OCI-LY7 (cell line): ENCODE measurements at regions of chr14 and their contacts with region 1.

Region 1: GRCh38 chr14:61252369-61253063 is 28.6 kb downstream of the TMEM30B start:
- DNase-seq: peak; percentile 89
- H3K4me3 ChIP-seq: peak overlapping the region; percentile 40
- H3K27ac ChIP-seq: peak overlapping the region; percentile 69
- H3K4me1 ChIP-seq: peaks cover 23% of the 10 kb centered on the region
- CTCF ChIP-seq: peak; percentile 98

Region 2: DNA sequence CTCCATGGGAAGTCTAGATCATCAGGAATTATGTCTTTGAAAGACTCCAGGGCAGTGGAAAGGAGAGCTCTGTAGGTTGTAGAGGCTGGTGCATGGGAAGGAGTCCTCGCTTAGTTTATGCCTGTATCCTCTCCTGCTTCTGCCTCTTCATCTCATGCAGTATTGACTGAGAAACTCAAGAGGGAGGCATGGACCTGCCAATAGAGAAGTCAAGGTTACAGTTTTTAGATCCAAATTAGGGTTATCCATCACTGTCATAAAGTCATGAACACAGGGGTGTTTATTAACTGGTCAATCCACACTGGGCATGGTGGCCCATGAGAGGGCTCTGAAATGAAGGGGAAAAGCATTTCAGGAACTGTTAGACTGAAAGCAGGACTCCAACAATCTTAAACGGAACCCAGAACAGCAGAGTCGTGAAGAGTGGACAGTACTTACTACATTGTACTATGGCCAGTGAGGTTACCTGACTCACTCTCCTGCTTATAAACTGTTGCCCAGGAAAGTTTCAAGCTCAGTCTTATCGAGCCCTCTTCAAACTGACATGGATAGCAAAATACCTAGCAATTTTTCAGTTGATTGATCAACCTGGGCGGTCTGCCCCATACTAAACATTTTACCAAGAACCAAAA is 1057.2 kb before region 1 on chr14:
- CTCF ChIA-PET with region 1: no interaction called
- POLR2A ChIA-PET with region 1: no interaction called
- intact Hi-C with region 1: loop called (anchors 10 kb)
- DNase-seq: peak; percentile 67
- H3K4me3 ChIP-seq: no peak overlapping the region
- H3K27ac ChIP-seq: no peak overlapping the region
- H3K4me1 ChIP-seq: peaks cover 24% of the 10 kb centered on the region
- CTCF ChIP-seq: peak; percentile 78

Region 3: GRCh38 chr14:60561845-60562746 is 690.4 kb before region 1 on chr14:
- CTCF ChIA-PET with region 1: interaction called, 3 read pairs
- POLR2A ChIA-PET with region 1: no interaction called
- intact Hi-C with region 1: loop called (anchors 5 kb)
- DNase-seq: peak; percentile 90
- H3K4me3 ChIP-seq: no peak overlapping the region
- H3K27ac ChIP-seq: no peak overlapping the region
- H3K4me1 ChIP-seq: peaks cover 78% of the 10 kb centered on the region
- CTCF ChIP-seq: peak; percentile 97

Region 4: GRCh38 chr14:60622917-60623257 is 629.6 kb before region 1 on chr14:
- CTCF ChIA-PET with region 1: interaction called, 3 read pairs
- POLR2A ChIA-PET with region 1: interaction called, 4 read pairs
- intact Hi-C with region 1: loop called (anchors 1 kb)
- DNase-seq: no peak
- H3K4me3 ChIP-seq: no peak overlapping the region
- H3K27ac ChIP-seq: no peak overlapping the region
- H3K4me1 ChIP-seq: peaks cover 4% of the 10 kb centered on the region
- CTCF ChIP-seq: no peak

Region 5: DNA sequence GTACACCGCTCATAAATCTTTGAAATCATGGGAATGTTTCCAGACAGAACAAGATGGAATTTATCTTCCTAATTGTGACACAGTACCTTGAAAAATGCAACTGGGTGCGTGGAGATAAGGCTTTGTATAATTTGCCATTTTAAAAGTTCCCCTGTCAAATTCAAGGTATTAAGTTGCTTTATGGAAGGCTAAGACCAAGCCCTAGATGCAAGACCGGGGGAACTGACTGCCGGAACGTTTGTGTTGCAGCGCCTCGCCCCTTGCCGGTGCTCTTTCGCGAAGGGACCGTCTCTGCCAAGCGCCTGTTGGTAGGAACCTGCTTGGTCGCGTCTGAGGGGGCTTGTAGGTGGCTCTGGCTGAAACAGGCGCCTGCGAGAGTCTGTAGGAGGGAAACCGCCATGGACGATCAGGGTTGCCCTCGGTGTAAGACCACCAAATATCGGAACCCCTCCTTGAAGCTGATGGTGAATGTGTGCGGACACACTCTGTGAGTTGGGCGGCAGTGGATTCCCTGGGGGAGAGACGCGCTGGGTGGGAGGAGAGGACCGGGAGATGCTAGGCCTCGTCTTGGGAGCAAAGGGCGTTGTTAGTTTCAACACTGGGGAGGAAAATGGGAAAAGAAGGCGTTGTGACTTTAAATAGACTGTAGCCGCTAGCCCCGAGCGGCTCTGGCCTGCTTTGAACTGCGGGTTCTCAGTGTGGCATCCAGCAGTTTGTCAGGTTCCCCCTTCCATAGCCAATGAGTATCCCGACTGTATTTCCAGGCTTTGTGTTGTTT is 517.9 kb before region 1 on chr14 and contains the start of gene MNAT1:
- CTCF ChIA-PET with region 1: no interaction called
- POLR2A ChIA-PET with region 1: no interaction called
- intact Hi-C with region 1: loop called (anchors 10 kb)
- DNase-seq: peak; percentile 89
- H3K4me3 ChIP-seq: peak within 1 kb of the TSS; percentile 90
- H3K27ac ChIP-seq: peak within 1 kb of the TSS; percentile 21
- H3K4me1 ChIP-seq: peaks cover 10% of the 10 kb centered on the region
- CTCF ChIP-seq: no peak
- total RNA-seq, gene MNAT1: 58.5 and 72.0 TPM in 2 replicates

Region 6: GRCh38 chr14:60945984-60946383 is 306.5 kb before region 1 on chr14:
- CTCF ChIA-PET with region 1: no interaction called
- POLR2A ChIA-PET with region 1: no interaction called
- intact Hi-C with region 1: no loop called
- DNase-seq: no peak
- H3K4me3 ChIP-seq: no peak overlapping the region
- H3K27ac ChIP-seq: no peak overlapping the region
- H3K4me1 ChIP-seq: no peaks in the 10 kb centered on the region
- CTCF ChIP-seq: no peak

Region 7: DNA sequence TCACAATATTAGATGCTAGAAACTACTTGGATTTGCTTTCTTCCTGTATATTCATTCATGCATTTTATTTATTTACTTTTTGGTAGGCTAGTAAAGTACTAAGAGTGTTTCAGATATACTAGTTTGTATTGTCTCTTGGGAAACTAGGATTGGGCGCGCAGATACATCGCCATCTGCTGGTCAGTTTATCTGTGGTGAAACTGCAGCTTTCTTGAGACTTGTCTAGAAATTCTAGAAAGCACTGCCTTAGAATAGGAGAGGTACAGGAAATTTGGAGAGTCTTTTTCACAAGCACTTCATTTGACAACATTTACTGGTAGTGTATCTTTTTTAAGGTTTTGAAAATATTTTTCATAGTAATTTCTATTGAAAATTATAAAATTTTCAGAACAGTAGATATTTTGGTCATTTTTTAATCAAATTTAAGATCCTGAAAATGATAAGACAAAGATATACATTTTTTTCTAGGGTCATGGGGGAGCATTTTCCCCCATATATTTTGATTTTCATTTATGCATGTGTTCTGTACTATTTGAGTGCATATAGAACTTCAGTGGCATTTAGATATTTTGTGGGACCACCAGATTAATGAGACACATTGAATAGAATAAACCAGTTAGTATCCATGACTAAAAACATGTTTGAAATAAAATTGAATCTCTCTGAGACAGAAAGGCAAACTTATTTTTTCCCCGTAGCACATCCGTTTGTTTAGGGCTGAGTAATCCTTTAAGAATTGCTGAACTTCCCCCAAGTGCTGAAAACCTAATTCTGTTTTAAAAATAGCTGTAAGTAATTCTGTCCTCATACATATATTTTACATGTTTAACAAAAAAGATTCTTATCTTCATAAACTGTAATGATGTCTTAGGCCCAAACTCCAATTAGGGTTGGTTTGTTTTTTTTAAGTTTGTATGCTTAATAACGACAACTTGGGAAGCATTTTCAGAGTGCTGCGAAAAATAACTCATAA is 227.0 kb before region 1 on chr14:
- CTCF ChIA-PET with region 1: no interaction called
- POLR2A ChIA-PET with region 1: interaction called, 3 read pairs
- intact Hi-C with region 1: loop called (anchors 1 kb)
- DNase-seq: peak; percentile 81
- H3K4me3 ChIP-seq: no peak overlapping the region
- H3K27ac ChIP-seq: no peak overlapping the region
- H3K4me1 ChIP-seq: peaks cover 20% of the 10 kb centered on the region
- CTCF ChIP-seq: peak; percentile 99

Region 8: GRCh38 chr14:61080591-61081010 is 171.9 kb before region 1 on chr14:
- CTCF ChIA-PET with region 1: no interaction called
- POLR2A ChIA-PET with region 1: no interaction called
- intact Hi-C with region 1: loop called (anchors 1 kb)
- DNase-seq: peak; percentile 94
- H3K4me3 ChIP-seq: peak overlapping the region; percentile 60
- H3K27ac ChIP-seq: peak overlapping the region; percentile 99
- H3K4me1 ChIP-seq: peaks cover 67% of the 10 kb centered on the region
- CTCF ChIP-seq: peak; percentile 53